ENCODE measurements at regions of chr1 and their contacts with region 1.

Region 1: GRCh38 chr1:162040681-162041080 is 17.0 kb upstream of the OLFML2B start:
- H3K4me3 ChIP-seq: no peak overlapping the region
- H3K27ac ChIP-seq: no peak overlapping the region
- H3K4me1 ChIP-seq: no peaks in the 10 kb centered on the region
- CTCF ChIP-seq: no peak

Region 2: GRCh38 chr1:161910604-161911003 is 130.1 kb before region 1 on chr1:
- CTCF ChIA-PET with region 1: interaction called, 11 read pairs
- POLR2A ChIA-PET with region 1: no interaction called
- H3K4me3 ChIP-seq: no peak overlapping the region
- H3K27ac ChIP-seq: no peak overlapping the region
- H3K4me1 ChIP-seq: peaks cover 13% of the 10 kb centered on the region
- CTCF ChIP-seq: no peak

Region 3: GRCh38 chr1:162091681-162092524 is 51.2 kb after region 1 on chr1:
- CTCF ChIA-PET with region 1: no interaction called
- POLR2A ChIA-PET with region 1: no interaction called
- H3K4me3 ChIP-seq: no peak overlapping the region
- H3K27ac ChIP-seq: peak overlapping the region; percentile 4; the same call in 1 of the 2 replicates
- H3K4me1 ChIP-seq: peaks cover 11% of the 10 kb centered on the region
- CTCF ChIP-seq: peak; percentile 37

Measured in HEK293 (cell line).